ENCODE measurements at regions of chr4 and their contacts with region 1.

Region 1: DNA sequence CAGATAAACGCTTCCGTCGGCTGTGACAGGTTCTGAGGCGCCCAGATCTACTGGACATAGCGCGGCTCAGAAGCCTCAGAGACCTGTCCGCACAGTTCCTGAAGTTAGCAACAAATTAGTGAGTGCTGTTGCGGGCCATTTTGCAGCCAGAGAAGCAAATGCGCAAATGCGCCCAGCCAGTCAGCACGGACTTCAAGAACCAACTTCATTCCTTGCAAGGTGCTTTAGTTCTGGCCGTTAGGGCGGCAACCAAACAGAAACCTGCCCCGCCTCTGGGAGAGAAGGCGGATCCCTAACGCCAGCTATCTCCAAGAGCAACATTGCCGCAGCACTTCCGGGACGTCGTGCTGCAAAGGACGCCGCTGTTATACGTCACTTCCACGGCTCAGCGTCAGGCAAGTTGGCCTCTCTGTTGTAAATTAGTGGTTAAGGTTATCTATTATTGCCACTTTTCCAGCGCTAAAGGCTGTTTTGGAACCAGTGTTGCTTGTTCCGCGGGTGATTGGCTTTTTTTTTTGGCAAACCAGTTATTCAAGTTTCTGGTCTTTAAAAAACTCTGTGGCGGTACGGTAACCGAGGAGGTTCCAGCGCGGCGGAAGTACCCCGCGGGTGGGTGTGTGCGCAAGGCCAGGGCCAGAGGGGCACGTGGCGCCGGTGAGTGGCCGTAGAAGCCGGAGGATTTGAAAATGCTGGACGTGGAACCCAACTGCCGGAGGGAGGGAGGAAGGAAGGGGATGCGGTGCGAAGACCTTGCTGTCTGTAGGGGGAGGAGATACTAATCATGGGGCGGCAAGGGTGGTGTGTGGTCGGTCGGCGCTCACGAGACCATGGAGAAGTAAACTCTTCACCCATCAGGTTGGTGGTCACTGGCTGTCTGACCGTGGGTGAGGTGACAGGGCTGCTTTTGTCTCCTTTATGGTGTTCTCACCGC is at the start of gene GAR1:
- DNase-seq: peak; percentile 85 to 98 (median 88)
- ATAC-seq: peak; percentile 92
- H3K4me3 ChIP-seq: peak within 1 kb of the TSS; percentile 85
- H3K27ac ChIP-seq: peak within 1 kb of the TSS; percentile 82
- H3K4me1 ChIP-seq: peaks cover 8 to 20% of the 10 kb centered on the region in 2 experiments
- H3K27me3 ChIP-seq: no peaks in the 10 kb centered on the region
- CTCF ChIP-seq: 0 out of 6 replicates have a peak, but pooled peaks of 1 of the 3 experiments have one; percentile 9
- EP300 ChIP-seq: peak; percentile 72
- POLR2A ChIP-seq: peak; percentile 90
- RAD21 ChIP-seq: no peak; a peak in 1 of 4 replicates
- polyA plus RNA-seq, gene GAR1: 35.7 to 44.2 TPM

Region 2: GRCh38 chr4:109559983-109560686 is 255.3 kb before region 1 on chr4 and contains the start of gene MCUB:
- CTCF ChIA-PET with region 1: no interaction called
- POLR2A ChIA-PET with region 1: no interaction called
- in situ Hi-C with region 1: no loop called
- intact Hi-C with region 1: loop called (anchors 10 kb)
- DNase-seq: peak; percentile 68 to 90 (median 78)
- ATAC-seq: peak; percentile 99
- H3K4me3 ChIP-seq: peak within 1 kb of the TSS; percentile 52
- H3K27ac ChIP-seq: peak within 1 kb of the TSS; percentile 55; the same call in 2 of the 3 replicates
- H3K4me1 ChIP-seq: peaks cover 5 to 17% of the 10 kb centered on the region in 2 experiments; a peak in 4 of 5 replicates
- H3K27me3 ChIP-seq: peaks cover 0 to 4% of the 10 kb centered on the region in 2 experiments; a peak in 1 of 5 replicates
- CTCF ChIP-seq: no peak
- EP300 ChIP-seq: no peak
- POLR2A ChIP-seq: peak; percentile 37; the same call in 1 of the 2 replicates
- RAD21 ChIP-seq: no peak
- polyA plus RNA-seq, gene MCUB: 1.4 to 1.6 TPM

Region 3: DNA sequence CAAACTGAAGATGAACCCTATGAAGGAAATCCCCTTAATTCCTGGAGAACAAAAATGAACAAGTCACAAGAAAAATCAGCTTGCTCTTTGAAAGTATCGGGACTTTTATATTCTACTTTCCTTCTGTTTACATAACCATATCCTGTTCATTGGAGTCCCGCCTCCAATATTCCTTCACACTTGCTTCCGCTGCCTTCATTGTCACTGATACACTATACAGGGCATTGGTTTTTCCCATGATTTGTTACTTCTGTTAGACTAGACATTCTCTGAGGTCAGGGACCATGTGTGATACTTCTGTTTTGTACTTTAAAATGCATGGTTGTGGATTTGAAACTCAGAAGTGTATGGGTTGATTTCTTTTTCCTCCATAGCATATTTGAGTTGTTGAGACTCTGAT is 236.6 kb before region 1 on chr4:
- CTCF ChIA-PET with region 1: no interaction called
- POLR2A ChIA-PET with region 1: no interaction called
- in situ Hi-C with region 1: no loop called
- intact Hi-C with region 1: no loop called
- DNase-seq: no peak
- ATAC-seq: no peak
- H3K4me3 ChIP-seq: no peak overlapping the region
- H3K27ac ChIP-seq: no peak overlapping the region
- H3K4me1 ChIP-seq: peaks cover 0 to 16% of the 10 kb centered on the region in 2 experiments; a peak in 4 of 5 replicates
- H3K27me3 ChIP-seq: no peaks in the 10 kb centered on the region
- CTCF ChIP-seq: no peak
- EP300 ChIP-seq: no peak
- POLR2A ChIP-seq: no peak
- RAD21 ChIP-seq: no peak

Region 4: DNA sequence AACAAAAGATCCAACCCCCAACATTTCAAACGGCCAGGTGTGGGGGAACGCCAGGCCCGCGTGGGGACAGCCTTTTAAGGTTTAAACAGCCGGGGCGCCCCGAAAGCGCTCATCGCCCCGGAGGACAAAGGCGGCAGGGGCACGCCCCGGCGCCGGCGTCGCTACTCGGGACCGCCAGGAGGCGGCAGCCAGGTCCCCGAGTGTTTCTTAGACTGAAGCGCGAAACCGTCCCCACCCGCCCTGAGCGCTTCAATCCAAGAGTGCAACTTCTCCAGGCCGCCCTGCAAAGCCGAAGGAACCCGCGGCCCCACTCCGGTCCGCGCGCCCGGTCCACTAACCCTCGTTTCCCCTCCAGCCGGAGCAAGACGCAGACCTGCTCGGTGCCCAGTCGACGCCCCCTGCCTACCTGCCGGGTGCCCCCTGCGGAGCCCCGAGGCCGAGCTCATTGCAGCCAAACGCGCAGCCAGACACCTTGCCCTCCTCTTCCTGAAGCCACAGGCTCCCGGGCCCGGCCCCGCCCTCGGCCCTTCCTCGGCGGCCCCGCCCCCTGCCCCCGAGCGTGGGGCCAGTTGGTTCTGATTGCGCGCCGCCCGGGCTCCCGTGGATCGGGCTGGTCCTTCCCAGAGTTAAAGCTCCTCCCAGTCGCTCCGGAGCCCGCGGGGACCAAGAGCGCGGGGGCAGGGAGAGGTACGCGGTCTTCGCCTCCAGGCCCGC is 112.3 kb before region 1 on chr4 and contains the start of gene CASP6:
- CTCF ChIA-PET with region 1: no interaction called
- POLR2A ChIA-PET with region 1: interaction called, 4 read pairs
- in situ Hi-C with region 1: no loop called
- intact Hi-C with region 1: loop called (anchors 2 kb)
- DNase-seq: peak; percentile 83 to 88 (median 85)
- ATAC-seq: peak; percentile 90
- H3K4me3 ChIP-seq: peak within 1 kb of the TSS; percentile 80
- H3K27ac ChIP-seq: peak within 1 kb of the TSS; percentile 82
- H3K4me1 ChIP-seq: peaks cover 22 to 24% of the 10 kb centered on the region in 2 experiments
- H3K27me3 ChIP-seq: no peaks in the 10 kb centered on the region
- CTCF ChIP-seq: peak; percentile 76 to 86 (median 77)
- EP300 ChIP-seq: no peak
- POLR2A ChIP-seq: peak; percentile 81
- RAD21 ChIP-seq: peak; percentile 68 to 72
- polyA plus RNA-seq, gene CASP6: 23.0 to 31.7 TPM

Region 5: GRCh38 chr4:109729718-109730618 is 85.4 kb before region 1 on chr4 and contains the start of gene PLA2G12A:
- CTCF ChIA-PET with region 1: no interaction called
- POLR2A ChIA-PET with region 1: interaction called, 4 read pairs
- in situ Hi-C with region 1: no loop called
- intact Hi-C with region 1: loop called (anchors 1 kb)
- DNase-seq: peak; percentile 80 to 95 (median 93)
- ATAC-seq: peak; percentile 89
- H3K4me3 ChIP-seq: peak within 1 kb of the TSS; percentile 81
- H3K27ac ChIP-seq: peak within 1 kb of the TSS; percentile 89
- H3K4me1 ChIP-seq: peaks cover 15 to 30% of the 10 kb centered on the region in 2 experiments
- H3K27me3 ChIP-seq: no peaks in the 10 kb centered on the region
- CTCF ChIP-seq: no peak
- EP300 ChIP-seq: no peak
- POLR2A ChIP-seq: peak; percentile 64
- RAD21 ChIP-seq: no peak
- polyA plus RNA-seq, gene PLA2G12A: 24.2 to 24.6 TPM

Measured in K562 (cell line).